Heart left ventricle (tissue), 16 donors: ENCODE measurements at regions of chr13 and their contacts with region 1.

Region 1: GRCh38 chr13:94251831-94252608 is 227.5 kb downstream of the DCT start:
- DNase-seq: peak in 2 of 5 donors; percentile 28 to 46
- ATAC-seq: peak in 3 of 4 donors; percentile 61 to 73 (median 68)
- H3K4me3 ChIP-seq: no peak overlapping the region
- H3K27ac ChIP-seq: no peak overlapping the region
- H3K4me1 ChIP-seq: peaks cover 0 to 5% (median 0%) of the 10 kb centered on the region in 12 donors
- H3K27me3 ChIP-seq: no peaks in the 10 kb centered on the region
- CTCF ChIP-seq: no peak
- POLR2A ChIP-seq: no peak

Region 2: DNA sequence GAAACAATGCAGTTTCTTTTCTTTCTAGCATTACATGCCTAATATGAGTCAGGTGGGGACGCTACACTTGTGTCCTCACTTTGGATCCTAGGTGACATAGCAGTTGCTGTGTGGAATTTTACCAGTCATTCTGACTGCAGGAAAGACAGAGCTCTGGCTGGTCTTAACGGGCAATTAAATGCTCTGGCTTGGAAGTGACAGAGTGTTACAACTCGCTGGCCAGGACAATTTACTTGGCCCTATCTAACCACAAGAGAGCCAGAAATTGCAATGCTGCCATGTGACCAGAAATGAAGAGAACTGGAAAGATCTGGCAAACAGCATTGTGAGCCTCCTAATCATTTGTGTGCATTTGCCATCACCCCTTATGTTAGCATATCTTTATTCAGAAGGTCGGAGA is 123.6 kb before region 1 on chr13:
- intact Hi-C with region 1: no loop called
- DNase-seq: peak in 4 of 5 donors; percentile 13 to 51 (median 37)
- ATAC-seq: peak; percentile 96 to 99 (median 98)
- H3K4me3 ChIP-seq: no peak overlapping the region
- H3K27ac ChIP-seq: peak overlapping the region in 11 of 12 donors; percentile 2 to 69 (median 38)
- H3K4me1 ChIP-seq: peaks cover 0 to 12% (median 3%) of the 10 kb centered on the region in 12 donors
- H3K27me3 ChIP-seq: no peaks in the 10 kb centered on the region
- CTCF ChIP-seq: no peak
- POLR2A ChIP-seq: no peak

Region 3: GRCh38 chr13:94201022-94201421 is 51.0 kb before region 1 on chr13:
- intact Hi-C with region 1: loop called in 1 of 10 experiments (anchors 5 kb)
- DNase-seq: no peak
- ATAC-seq: no peak
- H3K4me3 ChIP-seq: no peak overlapping the region
- H3K27ac ChIP-seq: no peak overlapping the region
- H3K4me1 ChIP-seq: no peaks in the 10 kb centered on the region
- H3K27me3 ChIP-seq: no peaks in the 10 kb centered on the region
- CTCF ChIP-seq: no peak
- POLR2A ChIP-seq: no peak